ENCODE measurements at regions of chr1 and their contacts with region 1.

Region 1: DNA sequence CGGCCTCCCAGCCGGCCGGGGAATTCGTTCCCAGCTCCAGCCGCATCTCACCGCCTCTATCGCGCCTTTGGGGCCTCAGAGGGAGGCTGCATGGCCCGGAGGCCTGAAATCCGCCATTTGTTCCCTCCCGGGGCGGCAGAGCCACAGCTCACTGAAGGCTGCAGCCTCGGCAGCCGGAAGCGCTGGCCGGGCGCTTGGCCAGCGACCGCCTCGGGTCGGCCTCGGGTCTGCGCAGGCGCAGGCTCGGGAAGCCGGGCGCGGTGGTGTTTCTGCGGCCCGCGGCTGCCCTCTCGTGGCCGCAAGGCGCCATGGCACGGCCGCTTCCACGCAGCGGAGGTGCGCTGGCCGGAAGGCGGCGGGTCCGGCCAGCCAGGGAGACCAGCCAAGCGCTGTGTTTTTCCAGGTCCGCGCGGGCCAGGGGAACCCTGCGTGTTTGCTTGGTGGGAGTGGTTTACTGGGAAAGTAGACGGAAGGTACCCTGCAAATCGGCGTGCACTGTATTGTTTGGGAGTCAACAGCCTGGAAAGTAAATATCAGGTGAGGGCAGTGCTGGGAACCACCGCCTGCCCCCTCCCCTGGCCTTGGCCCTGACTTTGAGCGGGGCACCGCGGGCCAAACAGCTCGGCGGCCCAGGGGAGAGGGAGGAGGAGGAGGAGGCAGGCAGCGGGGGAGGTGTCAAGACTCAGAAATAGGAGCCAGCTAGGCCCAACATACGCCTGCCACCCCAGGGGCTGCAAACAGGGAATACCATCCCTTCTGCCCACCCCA is 52.7 kb upstream of the CD34 start:
- DNase-seq: peak; percentile 87
- ATAC-seq: peak; percentile 94
- H3K4me3 ChIP-seq: peak overlapping the region; percentile 55 to 92 (median 88)
- H3K4me3 Mint-ChIP-seq: peak overlapping the region; percentile 92
- H3K27ac ChIP-seq: peak overlapping the region; percentile 27 to 62
- H3K27ac Mint-ChIP-seq: peak overlapping the region; percentile 70
- H3K4me1 ChIP-seq: peaks cover 21 to 25% of the 10 kb centered on the region in 2 donors
- H3K4me1 Mint-ChIP-seq: peaks cover 16% of the 10 kb centered on the region
- H3K27me3 ChIP-seq: peaks cover 0 to 29% (median 12%) of the 10 kb centered on the region in 4 experiments
- H3K27me3 Mint-ChIP-seq: peaks cover 20% of the 10 kb centered on the region
- CTCF ChIP-seq: peak; percentile 99

Region 2: GRCh38 chr1:207579436-207579799 is 384.2 kb before region 1 on chr1:
- CTCF ChIA-PET with region 1: interaction called, 12 read pairs
- POLR2A ChIA-PET with region 1: no interaction called
- intact Hi-C with region 1: no loop called
- DNase-seq: peak; percentile 54
- ATAC-seq: peak; percentile 67
- H3K4me3 ChIP-seq: no peak overlapping the region
- H3K4me3 Mint-ChIP-seq: no peak overlapping the region
- H3K27ac ChIP-seq: no peak overlapping the region
- H3K27ac Mint-ChIP-seq: peak overlapping the region; percentile 28
- H3K4me1 ChIP-seq: no peaks in the 10 kb centered on the region
- H3K4me1 Mint-ChIP-seq: peaks cover 9% of the 10 kb centered on the region
- H3K27me3 ChIP-seq: no peaks in the 10 kb centered on the region
- H3K27me3 Mint-ChIP-seq: no peaks in the 10 kb centered on the region
- CTCF ChIP-seq: peak; percentile 56

Region 3: GRCh38 chr1:207751790-207752455 is 211.7 kb before region 1 on chr1 and contains the start of gene CD46:
- CTCF ChIA-PET with region 1: no interaction called
- POLR2A ChIA-PET with region 1: no interaction called
- intact Hi-C with region 1: loop called (anchors 5 kb)
- DNase-seq: peak; percentile 94
- ATAC-seq: peak; percentile 98
- H3K4me3 ChIP-seq: peak within 1 kb of the TSS; percentile 70 to 91 (median 81)
- H3K4me3 Mint-ChIP-seq: peak within 1 kb of the TSS; percentile 99
- H3K27ac ChIP-seq: peak within 1 kb of the TSS; percentile 81 to 89
- H3K27ac Mint-ChIP-seq: peak within 1 kb of the TSS; percentile 98
- H3K4me1 ChIP-seq: peaks cover 18 to 26% of the 10 kb centered on the region in 2 donors
- H3K4me1 Mint-ChIP-seq: peaks cover 49% of the 10 kb centered on the region
- H3K27me3 ChIP-seq: no peaks in the 10 kb centered on the region
- H3K27me3 Mint-ChIP-seq: no peaks in the 10 kb centered on the region
- CTCF ChIP-seq: no peak
- total RNA-seq, gene CD46: 168 and 173 TPM in 2 replicates

Region 4: GRCh38 chr1:207885129-207886032 is 78.2 kb before region 1 on chr1:
- CTCF ChIA-PET with region 1: interaction called, 85 read pairs
- POLR2A ChIA-PET with region 1: no interaction called
- intact Hi-C with region 1: loop called (anchors 1 kb)
- DNase-seq: peak; percentile 82
- ATAC-seq: peak; percentile 87
- H3K4me3 ChIP-seq: no peak overlapping the region
- H3K4me3 Mint-ChIP-seq: peak overlapping the region; percentile 36
- H3K27ac ChIP-seq: no peak overlapping the region
- H3K27ac Mint-ChIP-seq: no peak overlapping the region
- H3K4me1 ChIP-seq: peaks cover 15 to 26% of the 10 kb centered on the region in 2 donors
- H3K4me1 Mint-ChIP-seq: peaks cover 35% of the 10 kb centered on the region
- H3K27me3 ChIP-seq: no peaks in the 10 kb centered on the region
- H3K27me3 Mint-ChIP-seq: peaks cover 12% of the 10 kb centered on the region
- CTCF ChIP-seq: peak; percentile 95

Region 5: GRCh38 chr1:207952617-207953542 is 10.7 kb before region 1 on chr1:
- CTCF ChIA-PET with region 1: interaction called, 10 read pairs
- POLR2A ChIA-PET with region 1: no interaction called
- intact Hi-C with region 1: no loop called
- DNase-seq: no peak
- ATAC-seq: no peak
- H3K4me3 ChIP-seq: no peak overlapping the region
- H3K4me3 Mint-ChIP-seq: no peak overlapping the region
- H3K27ac ChIP-seq: no peak overlapping the region
- H3K27ac Mint-ChIP-seq: no peak overlapping the region
- H3K4me1 ChIP-seq: peaks cover 0 to 6% of the 10 kb centered on the region in 2 donors
- H3K4me1 Mint-ChIP-seq: peaks cover 7% of the 10 kb centered on the region
- H3K27me3 ChIP-seq: peaks cover 0 to 10% (median 4%) of the 10 kb centered on the region in 4 experiments
- H3K27me3 Mint-ChIP-seq: peaks cover 35% of the 10 kb centered on the region
- CTCF ChIP-seq: no peak

Region 6: DNA sequence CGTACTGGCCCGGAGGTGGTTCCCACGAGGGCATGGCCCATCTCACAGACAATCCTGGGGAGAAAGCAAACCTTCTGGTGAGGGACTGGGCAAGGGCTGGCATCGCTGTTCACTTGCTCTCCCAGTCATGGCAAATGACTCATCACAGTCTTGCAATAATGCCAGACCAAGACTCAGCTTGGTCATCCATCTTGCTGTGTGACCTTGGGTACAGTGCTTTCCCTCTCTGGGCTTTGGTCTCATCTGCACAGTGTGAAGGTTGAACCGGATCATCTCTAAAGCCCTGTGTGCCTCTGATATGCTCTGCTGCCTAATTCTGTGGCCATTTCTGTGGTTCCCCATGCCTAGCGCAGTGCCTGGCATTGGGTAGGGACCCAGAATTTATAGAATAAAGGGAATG is 90.9 kb after region 1 on chr1:
- CTCF ChIA-PET with region 1: no interaction called
- POLR2A ChIA-PET with region 1: no interaction called
- intact Hi-C with region 1: no loop called
- DNase-seq: no peak
- ATAC-seq: no peak
- H3K4me3 ChIP-seq: no peak overlapping the region
- H3K4me3 Mint-ChIP-seq: no peak overlapping the region
- H3K27ac ChIP-seq: no peak overlapping the region
- H3K27ac Mint-ChIP-seq: no peak overlapping the region
- H3K4me1 ChIP-seq: no peaks in the 10 kb centered on the region
- H3K4me1 Mint-ChIP-seq: no peaks in the 10 kb centered on the region
- H3K27me3 ChIP-seq: no peaks in the 10 kb centered on the region
- H3K27me3 Mint-ChIP-seq: peaks cover 22% of the 10 kb centered on the region
- CTCF ChIP-seq: no peak

Measured in B cell (primary cell).